Activated CD8-positive, alpha-beta T cell treated with anti-CD3 and anti-CD28 coated beads, Interleukin-2, amount 10 ng/mL, durations not matched to agents 7 days and 5 days (primary cell): ENCODE measurements at regions of chr5 and their contacts with region 1.

Region 1: GRCh38 chr5:113294311-113295110 is 140.3 kb downstream of the TSSK1B start:
- DNase-seq: peak; percentile 87
- ATAC-seq: peak; percentile 92
- H3K4me3 Mint-ChIP-seq: peak overlapping the region; percentile 90
- H3K27ac Mint-ChIP-seq: peak overlapping the region; percentile 83
- H3K4me1 Mint-ChIP-seq: peaks cover 17% of the 10 kb centered on the region
- H3K27me3 Mint-ChIP-seq: peaks cover 43% of the 10 kb centered on the region

Region 2: DNA sequence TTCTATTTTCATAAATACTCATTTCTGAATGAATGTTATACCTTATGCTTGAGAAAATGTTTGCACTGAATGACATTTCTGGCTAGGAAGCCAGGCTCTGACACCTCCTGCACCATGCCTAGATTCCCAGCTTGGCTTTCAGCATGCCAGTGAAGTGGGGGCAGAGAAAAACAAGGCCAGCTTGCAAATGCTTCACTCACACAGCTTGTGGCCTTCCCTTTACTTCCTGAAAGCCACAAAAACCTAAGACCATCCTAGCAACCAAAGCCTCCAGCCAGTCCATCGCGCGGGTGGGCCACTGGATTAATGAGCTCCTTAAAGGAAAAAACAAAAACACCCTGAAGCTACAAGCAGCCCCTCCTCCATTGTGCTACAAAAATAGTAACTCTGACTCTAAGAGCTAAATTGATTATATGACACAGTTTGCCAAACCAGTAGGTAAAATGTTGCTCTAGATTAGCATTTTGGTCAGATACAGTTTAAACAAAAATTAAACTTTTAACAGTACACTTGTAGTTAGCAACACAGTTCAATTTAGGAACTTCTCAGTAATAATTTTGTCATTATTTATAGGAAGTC is 19.6 kb before region 1 on chr5:
- CTCF ChIA-PET with region 1: interaction called, 6 read pairs
- POLR2A ChIA-PET with region 1: interaction called, 14 read pairs
- DNase-seq: no peak
- ATAC-seq: no peak
- H3K4me3 Mint-ChIP-seq: no peak overlapping the region
- H3K27ac Mint-ChIP-seq: no peak overlapping the region
- H3K4me1 Mint-ChIP-seq: peaks cover 18% of the 10 kb centered on the region
- H3K27me3 Mint-ChIP-seq: no peaks in the 10 kb centered on the region